ENCODE measurements at regions of chr11 and their contacts with region 1.

Region 1: DNA sequence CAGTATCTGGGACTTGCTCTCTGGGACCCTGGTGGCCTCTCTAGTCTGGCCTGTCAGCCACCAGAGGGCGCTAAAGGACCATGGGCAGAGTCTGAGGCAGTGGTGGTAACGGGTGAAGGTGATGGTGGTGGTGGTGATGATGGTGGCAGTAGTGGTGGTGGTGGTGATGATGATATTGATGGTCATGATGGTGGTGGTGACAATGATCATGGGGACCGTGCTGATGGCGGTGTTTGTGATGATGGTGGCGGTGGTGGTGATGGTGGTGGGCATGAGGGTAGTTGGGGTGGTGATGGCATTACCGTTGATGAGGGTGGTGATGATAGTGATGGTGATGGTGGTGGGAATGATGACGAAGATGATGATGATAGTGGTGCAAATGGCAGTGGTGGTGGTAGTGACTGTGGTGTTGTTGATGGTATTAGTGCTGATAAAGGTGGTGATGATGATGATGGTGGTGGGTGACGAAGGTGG is 16.0 kb downstream of the TRPM5 start:
- DNase-seq: peak; percentile 19
- H3K4me3 ChIP-seq: no peak overlapping the region
- H3K27ac ChIP-seq: no peak overlapping the region
- H3K4me1 ChIP-seq: no peaks in the 10 kb centered on the region
- H3K27me3 ChIP-seq: no peaks in the 10 kb centered on the region
- CTCF ChIP-seq: peak; percentile 71 to 99

Region 2: GRCh38 chr11:2077061-2077802 is 351.1 kb before region 1 on chr11:
- CTCF ChIA-PET with region 1: no interaction called
- dilution Hi-C with region 1: no loop called
- in situ Hi-C with region 1: no loop called
- intact Hi-C with region 1: no loop called
- DNase-seq: peak; percentile 94
- H3K4me3 ChIP-seq: no peak overlapping the region
- H3K27ac ChIP-seq: peak overlapping the region; percentile 87
- H3K4me1 ChIP-seq: peaks cover 26% of the 10 kb centered on the region
- H3K27me3 ChIP-seq: peaks cover 2% of the 10 kb centered on the region
- CTCF ChIP-seq: no peak

Region 3: GRCh38 chr11:2885676-2886081 is 457.3 kb after region 1 on chr11 and contains the start of gene CDKN1C:
- CTCF ChIA-PET with region 1: no interaction called
- dilution Hi-C with region 1: no loop called
- in situ Hi-C with region 1: loop called (anchors 25 kb)
- intact Hi-C with region 1: loop called (anchors 1 kb)
- DNase-seq: peak; percentile 65
- H3K4me3 ChIP-seq: peak within 1 kb of the TSS; percentile 35 to 63 (median 54)
- H3K27ac ChIP-seq: no peak within 1 kb of the TSS
- H3K4me1 ChIP-seq: peaks cover 17% of the 10 kb centered on the region
- H3K27me3 ChIP-seq: peaks cover 19% of the 10 kb centered on the region
- CTCF ChIP-seq: no peak
- total RNA-seq, gene CDKN1C: 0.38 to 0.50 TPM

Region 4: DNA sequence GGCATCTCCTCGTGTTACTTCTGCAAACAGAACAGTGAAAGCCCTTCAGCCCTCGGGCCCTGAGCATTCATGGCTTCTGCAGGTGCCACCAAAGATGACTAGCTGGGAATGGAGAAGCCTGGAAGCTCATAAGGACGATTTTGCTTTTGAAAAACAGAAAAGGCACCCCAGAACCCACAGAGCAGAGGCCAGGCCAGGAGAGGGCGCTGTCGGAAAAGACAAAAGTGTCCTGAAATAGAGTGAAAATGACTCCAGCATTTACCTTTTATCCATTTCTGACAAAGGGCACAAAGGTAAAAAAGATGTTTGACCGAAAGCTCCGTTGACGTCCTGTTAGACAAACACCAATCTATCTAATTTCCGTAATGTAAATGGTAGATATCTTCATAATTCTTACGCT is 912.9 kb after region 1 on chr11:
- CTCF ChIA-PET with region 1: no interaction called
- dilution Hi-C with region 1: no loop called
- in situ Hi-C with region 1: no loop called
- intact Hi-C with region 1: no loop called
- DNase-seq: peak; percentile 27
- H3K4me3 ChIP-seq: no peak overlapping the region
- H3K27ac ChIP-seq: no peak overlapping the region
- H3K4me1 ChIP-seq: peaks cover 10% of the 10 kb centered on the region
- H3K27me3 ChIP-seq: no peaks in the 10 kb centered on the region
- CTCF ChIP-seq: peak; percentile 77 to 82